ENCODE measurements at regions of chr10 and their contacts with region 1.

Region 1: DNA sequence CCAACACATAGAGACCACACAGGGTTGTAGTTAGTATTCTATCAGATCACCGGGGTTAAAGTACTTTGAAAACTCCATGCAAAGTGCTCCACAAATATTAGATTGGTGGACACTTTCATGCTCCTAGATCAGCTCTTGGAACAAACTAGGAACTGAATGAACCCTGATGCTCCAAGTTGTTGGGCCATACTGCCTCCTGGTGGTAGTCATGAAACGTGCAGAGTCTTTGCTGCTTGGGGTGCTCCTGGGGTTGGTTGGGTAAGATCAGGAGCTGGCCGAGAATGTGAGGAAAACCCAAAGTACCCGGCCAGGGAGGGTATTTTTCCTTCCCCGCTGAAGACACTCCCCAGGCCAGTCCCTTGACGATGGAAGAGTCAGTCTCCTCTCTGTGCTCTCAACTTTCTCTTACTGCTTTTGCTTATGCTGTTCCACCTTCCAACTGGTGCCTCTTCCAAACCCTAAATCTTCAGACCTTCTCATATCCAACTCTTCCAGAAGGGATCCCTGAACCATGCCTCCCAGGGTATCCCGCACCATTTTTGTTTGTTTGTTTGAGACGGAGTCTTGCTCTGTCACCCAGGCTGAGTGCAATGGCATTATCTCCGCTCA is 920 bp upstream of the RPEL1 start:
- DNase-seq: no peak
- H3K4me3 ChIP-seq: no peak overlapping the region
- H3K27ac ChIP-seq: no peak overlapping the region
- H3K4me1 ChIP-seq: peaks cover 11 to 22% (median 12%) of the 10 kb centered on the region in 4 donors
- H3K27me3 ChIP-seq: no peaks in the 10 kb centered on the region
- CTCF ChIP-seq: peak; percentile 88 to 93 (median 92)
- EP300 ChIP-seq: no peak
- POLR2A ChIP-seq: no peak

Region 2: GRCh38 chr10:102917962-102918816 is 326.6 kb before region 1 on chr10 and contains the start of gene CNNM2:
- intact Hi-C with region 1: loop called (anchors 2 kb)
- DNase-seq: peak; percentile 100
- H3K4me3 ChIP-seq: peak within 1 kb of the TSS; percentile 89 to 99 (median 95)
- H3K27ac ChIP-seq: peak within 1 kb of the TSS; percentile 87 to 96 (median 91)
- H3K4me1 ChIP-seq: peaks cover 14 to 52% (median 51%) of the 10 kb centered on the region in 4 donors
- H3K27me3 ChIP-seq: no peaks in the 10 kb centered on the region
- CTCF ChIP-seq: no peak
- EP300 ChIP-seq: no peak
- POLR2A ChIP-seq: no peak
- total RNA-seq, gene CNNM2: 4.0 to 9.3 (median 5.4) TPM

Region 3: GRCh38 chr10:103069453-103070331 is 175.1 kb before region 1 on chr10:
- intact Hi-C with region 1: loop called (anchors 10 kb)
- DNase-seq: no peak
- H3K4me3 ChIP-seq: no peak overlapping the region
- H3K27ac ChIP-seq: no peak overlapping the region
- H3K4me1 ChIP-seq: peaks cover 0 to 6% (median 0%) of the 10 kb centered on the region in 4 donors
- H3K27me3 ChIP-seq: no peaks in the 10 kb centered on the region
- CTCF ChIP-seq: peak; percentile 65 to 70 (median 68)
- EP300 ChIP-seq: no peak
- POLR2A ChIP-seq: no peak

Region 4: DNA sequence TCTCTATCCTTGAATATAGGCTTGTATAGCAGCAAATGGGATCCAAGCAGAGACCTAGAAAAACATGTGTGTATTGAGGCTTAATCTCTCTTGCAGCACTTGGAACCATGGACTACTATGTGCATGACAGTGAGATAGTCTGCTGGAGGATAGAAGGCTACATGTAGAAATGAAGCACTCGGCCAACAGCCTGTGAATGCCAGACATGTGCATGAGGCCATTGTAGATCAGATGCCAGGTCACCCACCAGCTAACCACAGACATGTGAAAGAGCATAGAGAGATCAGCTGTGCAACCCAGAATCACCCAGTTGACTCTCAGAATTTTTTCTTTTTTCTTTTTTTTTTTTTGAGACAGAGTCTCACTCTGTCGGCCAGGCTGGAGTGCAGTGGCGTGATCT is 142.6 kb before region 1 on chr10:
- intact Hi-C with region 1: loop called (anchors 10 kb)
- DNase-seq: no peak
- H3K4me3 ChIP-seq: no peak overlapping the region
- H3K27ac ChIP-seq: no peak overlapping the region
- H3K4me1 ChIP-seq: peaks cover 3 to 22% (median 11%) of the 10 kb centered on the region in 4 donors
- H3K27me3 ChIP-seq: no peaks in the 10 kb centered on the region
- CTCF ChIP-seq: no peak
- EP300 ChIP-seq: no peak
- POLR2A ChIP-seq: no peak

Region 5: DNA sequence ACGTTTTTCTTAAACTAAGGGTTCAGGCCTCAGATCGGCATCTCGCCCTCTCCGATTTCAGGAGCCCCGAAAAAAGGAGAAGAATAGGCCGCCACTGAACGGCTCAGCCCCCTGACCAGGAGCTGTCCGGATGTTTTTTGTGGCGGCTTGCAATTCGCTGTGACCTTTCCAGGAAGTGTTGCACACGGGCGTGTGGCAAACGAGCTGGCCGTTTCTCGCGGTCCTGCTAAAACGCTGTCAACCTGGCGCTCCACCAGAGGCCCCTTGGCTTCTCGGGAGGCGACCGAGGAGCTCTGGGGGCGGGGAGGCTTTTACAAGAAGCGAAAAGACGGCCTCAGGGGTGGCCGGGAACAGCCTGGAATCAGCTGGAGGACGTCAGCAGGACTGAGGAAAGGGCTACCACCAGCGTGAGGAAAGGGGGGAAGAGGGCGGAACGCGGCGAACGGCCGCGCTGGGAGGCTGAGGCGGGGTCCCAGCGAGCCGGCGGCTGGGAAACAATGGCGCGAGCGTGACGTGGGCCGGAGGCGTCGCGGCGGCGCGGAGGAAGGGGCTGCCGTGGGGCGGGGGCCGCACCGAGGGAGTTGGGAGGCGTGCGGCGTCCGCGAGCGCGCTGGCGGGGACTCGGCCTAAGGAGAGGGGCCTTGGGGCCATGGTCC is 52.2 kb before region 1 on chr10:
- intact Hi-C with region 1: loop called (anchors 5 kb)
- DNase-seq: peak; percentile 94
- H3K4me3 ChIP-seq: peak overlapping the region; percentile 98 to 100 (median 99)
- H3K27ac ChIP-seq: peak overlapping the region; percentile 98 to 100 (median 98)
- H3K4me1 ChIP-seq: peaks cover 52 to 63% (median 58%) of the 10 kb centered on the region in 4 donors
- H3K27me3 ChIP-seq: no peaks in the 10 kb centered on the region
- CTCF ChIP-seq: no peak
- EP300 ChIP-seq: no peak
- POLR2A ChIP-seq: no peak

Region 6: GRCh38 chr10:103416436-103417147 is 171.8 kb after region 1 on chr10:
- intact Hi-C with region 1: no loop called
- DNase-seq: no peak
- H3K4me3 ChIP-seq: no peak overlapping the region
- H3K27ac ChIP-seq: no peak overlapping the region
- H3K4me1 ChIP-seq: no peaks in the 10 kb centered on the region
- H3K27me3 ChIP-seq: no peaks in the 10 kb centered on the region
- CTCF ChIP-seq: peak; percentile 60 to 68 (median 66)
- EP300 ChIP-seq: no peak
- POLR2A ChIP-seq: no peak

Measured in esophagus muscularis mucosa (tissue), 4 donors.